Mammary epithelial cell (primary cell): ENCODE measurements at regions of chr16 and their contacts with region 1.

Region 1: GRCh38 chr16:62585041-62585545 is 548.9 kb upstream of the CDH8 start:
- DNase-seq: no peak
- H3K4me3 ChIP-seq: no peak overlapping the region
- H3K27ac ChIP-seq: no peak overlapping the region
- H3K4me1 ChIP-seq: no peaks in the 10 kb centered on the region
- H3K27me3 ChIP-seq: no peaks in the 10 kb centered on the region
- CTCF ChIP-seq: no peak

Region 2: GRCh38 chr16:62516001-62516400 is 69.1 kb before region 1 on chr16:
- CTCF ChIA-PET with region 1: no interaction called
- dilution Hi-C with region 1: no loop called
- in situ Hi-C with region 1: no loop called
- intact Hi-C with region 1: no loop called
- DNase-seq: no peak
- H3K4me3 ChIP-seq: no peak overlapping the region
- H3K27ac ChIP-seq: no peak overlapping the region
- H3K4me1 ChIP-seq: no peaks in the 10 kb centered on the region
- H3K27me3 ChIP-seq: no peaks in the 10 kb centered on the region
- CTCF ChIP-seq: no peak

Region 3: GRCh38 chr16:62665269-62665668 is 80.2 kb after region 1 on chr16:
- CTCF ChIA-PET with region 1: no interaction called
- dilution Hi-C with region 1: loop called (anchors 5 kb)
- in situ Hi-C with region 1: no loop called
- intact Hi-C with region 1: no loop called
- DNase-seq: no peak
- H3K4me3 ChIP-seq: no peak overlapping the region
- H3K27ac ChIP-seq: no peak overlapping the region
- H3K4me1 ChIP-seq: no peaks in the 10 kb centered on the region
- H3K27me3 ChIP-seq: no peaks in the 10 kb centered on the region
- CTCF ChIP-seq: no peak